Posterior cingulate gyrus (tissue), 11 donors: ENCODE measurements at regions of chr12 and their contacts with region 1.

Region 1: DNA sequence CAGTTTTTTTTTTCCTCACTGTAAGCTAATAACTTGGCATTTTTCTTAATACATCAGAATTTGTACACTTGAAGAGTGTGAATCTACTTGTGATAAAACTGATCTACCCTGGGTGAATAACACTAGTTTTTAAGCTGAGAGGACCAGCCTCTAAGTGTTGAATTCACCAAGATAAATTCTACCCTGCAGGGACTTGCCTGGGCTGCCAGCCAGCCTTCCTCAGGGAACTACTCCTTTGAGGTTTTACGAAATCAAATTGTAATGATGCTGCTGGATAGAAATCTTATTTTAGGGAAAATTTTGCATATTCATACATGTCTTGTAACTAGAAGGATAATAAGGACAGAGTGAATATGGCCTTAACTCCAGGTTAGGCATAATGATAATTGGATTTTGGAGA is 1.9 kb downstream of the MED21 start:
- DNase-seq: peak in 1 of 10 donors; percentile 66

Region 2: DNA sequence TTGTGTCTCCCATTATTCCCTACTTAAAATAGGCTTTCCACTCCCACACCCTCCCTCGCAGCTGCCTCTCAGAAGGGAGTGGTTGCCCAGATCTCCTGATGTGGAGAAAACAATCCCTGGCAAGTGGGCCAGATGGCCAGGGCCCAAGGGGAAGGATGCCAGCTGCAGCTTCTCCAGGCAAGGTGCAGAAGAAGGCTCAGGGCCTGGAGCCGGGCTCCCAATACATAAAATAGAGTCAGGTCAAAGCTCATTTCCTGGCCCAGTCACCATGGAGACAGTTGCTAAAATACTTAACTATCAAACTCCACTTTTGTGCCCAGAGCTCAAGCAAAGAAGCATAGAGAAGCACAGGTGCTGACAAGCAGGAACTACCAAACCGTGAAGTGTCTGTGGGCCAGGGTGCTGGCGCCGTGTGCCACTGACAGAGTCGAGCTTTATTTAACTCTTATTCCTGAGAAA is 145.6 kb before region 1 on chr12:
- intact Hi-C with region 1: no loop called
- DNase-seq: peak; percentile 20 to 92 (median 44)

Region 3: DNA sequence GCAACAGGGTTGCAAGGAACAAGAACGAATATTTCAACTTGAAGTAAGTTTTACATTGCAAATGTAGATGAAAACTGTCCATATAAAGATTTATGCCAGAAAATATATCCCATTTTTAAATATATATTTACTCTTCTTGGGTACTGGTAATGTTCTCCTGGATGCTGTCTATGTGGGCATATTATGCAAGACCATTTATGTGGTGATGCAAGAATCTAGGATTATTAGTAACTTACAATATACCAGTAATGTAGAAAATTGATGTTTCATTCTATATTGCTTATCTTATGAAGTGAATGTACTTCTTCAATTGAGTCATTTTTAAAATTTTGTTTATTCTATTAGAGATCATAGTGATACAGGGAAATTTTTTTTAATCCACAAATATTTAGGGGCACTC is 60.9 kb before region 1 on chr12:
- intact Hi-C with region 1: no loop called
- DNase-seq: no peak

Region 4: GRCh38 chr12:27034607-27035293 is 10.5 kb after region 1 on chr12:
- intact Hi-C with region 1: no loop called
- DNase-seq: no peak

Region 5: DNA sequence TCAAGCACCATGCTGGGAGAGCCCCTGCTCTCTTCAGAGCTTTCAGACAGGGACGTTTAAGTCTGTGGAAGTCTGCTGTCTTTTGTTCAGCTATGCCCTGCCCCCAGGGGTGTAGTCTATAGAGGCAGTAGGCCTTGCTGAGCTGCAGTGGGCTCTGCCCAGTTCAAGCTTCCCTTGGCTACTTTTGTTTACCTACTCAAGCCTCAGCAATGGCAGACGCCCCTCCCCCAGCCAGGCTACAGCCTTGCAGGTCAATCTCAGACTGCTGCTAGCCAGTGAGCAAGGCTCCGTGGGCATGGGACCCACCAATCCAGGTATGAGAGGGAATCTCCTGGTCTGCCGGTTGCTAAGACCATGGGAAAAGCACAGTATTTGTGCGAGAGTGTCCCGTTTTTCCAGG is 95.5 kb after region 1 on chr12:
- intact Hi-C with region 1: no loop called
- DNase-seq: peak in 1 of 10 donors; percentile 66

Region 6: GRCh38 chr12:27142101-27142721 is 117.9 kb after region 1 on chr12:
- intact Hi-C with region 1: loop called (anchors 10 kb)
- DNase-seq: peak in 6 of 10 donors; percentile 24 to 84 (median 56)

Region 7: DNA sequence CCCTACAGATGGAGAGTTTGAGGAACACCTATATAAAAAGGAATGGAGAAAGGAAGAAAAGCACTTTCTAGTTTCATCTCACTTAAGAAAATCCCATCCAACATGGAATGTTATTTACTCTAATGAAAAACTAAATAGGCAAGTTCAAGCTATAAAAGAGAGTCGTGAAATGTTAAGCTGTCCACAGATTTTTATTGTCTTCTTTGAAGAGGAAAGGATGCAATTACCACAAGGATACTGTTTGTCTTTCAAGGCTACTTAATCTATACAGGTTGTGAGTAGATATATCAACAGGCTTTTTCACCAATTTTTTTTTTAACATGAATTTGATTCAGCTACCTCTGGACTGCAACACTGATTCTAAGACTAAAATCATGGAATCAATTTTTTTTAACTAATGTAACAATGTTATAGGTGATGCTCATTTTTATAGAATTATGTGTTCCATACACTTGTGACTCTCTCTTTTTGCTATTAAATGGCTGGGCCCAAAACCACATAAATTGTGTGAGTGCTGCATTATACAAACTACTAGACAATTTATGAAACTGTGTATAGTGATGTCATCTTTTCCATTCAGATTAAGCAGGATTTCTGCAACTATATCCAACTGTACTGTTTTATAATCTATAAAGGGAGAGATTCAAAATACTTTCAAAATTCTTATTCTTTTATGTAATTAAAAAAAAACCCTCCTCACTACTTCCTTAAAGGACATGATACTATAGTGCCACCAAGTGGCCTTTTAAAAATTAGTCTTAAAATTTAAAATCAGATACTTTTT is 281.6 kb after region 1 on chr12:
- intact Hi-C with region 1: loop called (anchors 2 kb)
- DNase-seq: no peak